Heart right ventricle (tissue), 16 donors: ENCODE measurements at regions of chr20 and their contacts with region 1.

Region 1: GRCh38 chr20:1375515-1375914 is 17.3 kb downstream of the FKBP1A start:
- DNase-seq: no peak
- ATAC-seq: peak in 7 of 8 donors; percentile 36 to 64 (median 52)
- H3K4me3 ChIP-seq: peak overlapping the region in 2 of 10 donors; percentile 10 to 20
- H3K27ac ChIP-seq: peak overlapping the region in 9 of 10 donors; percentile 40 to 80 (median 67)
- H3K4me1 ChIP-seq: peaks cover 25 to 100% (median 96%) of the 10 kb centered on the region in 9 donors
- H3K27me3 ChIP-seq: no peaks in the 10 kb centered on the region
- CTCF ChIP-seq: no peak

Region 2: DNA sequence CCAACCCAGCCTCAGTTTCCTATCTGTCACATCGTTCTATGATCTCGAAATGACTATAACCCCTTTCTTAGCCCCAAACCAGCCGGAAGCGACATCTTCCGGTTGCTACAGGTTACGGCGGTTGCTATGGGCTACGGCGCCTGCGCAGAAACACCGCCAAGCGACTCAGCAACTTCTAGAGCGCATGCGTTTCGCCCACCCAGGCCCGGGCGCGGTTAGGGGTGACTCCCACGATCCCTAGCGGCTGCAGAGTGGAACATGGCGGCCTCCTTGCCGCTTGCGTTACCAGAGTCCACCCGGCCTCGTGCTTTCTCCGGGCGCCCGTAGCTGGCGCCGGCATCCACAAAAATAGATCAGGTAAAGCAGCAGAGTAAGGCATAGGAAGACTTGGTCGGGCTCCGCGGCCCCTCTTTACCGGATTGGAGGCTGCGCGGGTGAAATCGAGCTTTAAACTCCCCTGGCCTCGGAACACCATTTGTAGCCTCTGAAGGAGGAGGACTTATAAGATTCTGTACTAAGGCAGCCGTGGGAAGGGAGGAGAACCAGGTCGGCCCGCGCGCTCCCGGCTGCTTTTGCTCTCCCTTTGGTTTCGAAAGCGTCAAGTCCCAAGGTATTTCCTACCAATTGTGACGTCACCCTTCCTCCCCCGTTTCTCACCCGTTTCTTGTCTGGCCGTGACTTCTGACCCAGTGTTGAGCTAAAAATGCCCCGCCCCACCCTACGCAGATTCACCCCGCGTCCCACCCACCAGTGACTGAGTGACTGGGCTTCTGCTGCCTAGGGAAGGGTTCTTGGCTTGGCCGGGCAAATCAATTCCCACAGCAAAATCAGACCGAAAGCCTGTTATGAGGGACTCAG is 50.1 kb before region 1 on chr20:
- intact Hi-C with region 1: loop called in 3 of 10 experiments (anchors 2 to 5 kb)
- DNase-seq: peak; percentile 98 to 99
- ATAC-seq: peak; percentile 86 to 96 (median 92)
- H3K4me3 ChIP-seq: peak overlapping the region; percentile 54 to 93 (median 84)
- H3K27ac ChIP-seq: peak overlapping the region; percentile 89 to 100 (median 99)
- H3K4me1 ChIP-seq: peaks cover 24 to 92% (median 80%) of the 10 kb centered on the region in 9 donors
- H3K27me3 ChIP-seq: no peaks in the 10 kb centered on the region
- CTCF ChIP-seq: peak in 7 of 9 donors; percentile 22 to 47 (median 32)

Region 3: DNA sequence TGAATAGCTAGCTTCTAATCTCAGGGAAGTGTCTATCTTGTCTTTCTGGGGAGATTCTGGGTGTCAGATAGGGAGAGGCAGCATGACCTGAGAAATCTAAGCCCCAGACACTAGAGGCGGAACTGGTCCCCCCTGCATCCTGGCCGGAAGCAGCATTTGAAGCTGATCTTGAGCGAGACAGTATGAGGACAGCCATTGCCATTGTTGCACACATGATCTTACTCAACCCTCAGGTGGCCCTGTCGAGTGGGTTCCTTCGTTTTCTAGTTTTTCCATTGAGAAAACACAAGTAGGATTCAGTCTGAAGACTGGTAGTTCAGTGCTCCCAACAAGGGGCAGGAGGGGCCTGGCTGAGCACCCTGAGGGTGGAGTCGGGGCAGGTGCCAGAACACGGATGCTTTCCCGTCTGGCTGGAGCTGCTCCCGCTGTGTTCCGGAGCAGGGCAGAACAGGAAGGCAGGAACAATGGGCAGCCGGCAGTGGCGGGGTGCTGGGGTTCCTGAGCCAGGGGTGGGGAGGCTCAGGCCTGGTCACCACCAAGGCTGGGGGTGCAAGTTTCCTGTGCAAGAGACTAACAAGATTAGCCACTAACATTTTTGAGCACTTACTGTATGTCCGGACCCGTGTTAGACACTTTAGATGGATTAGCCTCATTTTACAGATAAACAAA is 38.7 kb before region 1 on chr20:
- intact Hi-C with region 1: loop called in 1 of 10 experiments (anchors 5 kb)
- DNase-seq: peak; percentile 86 to 90
- ATAC-seq: peak; percentile 87 to 97 (median 94)
- H3K4me3 ChIP-seq: peak overlapping the region in 2 of 10 donors; percentile 2 to 8
- H3K27ac ChIP-seq: peak overlapping the region; percentile 54 to 89 (median 78)
- H3K4me1 ChIP-seq: peaks cover 12 to 56% (median 44%) of the 10 kb centered on the region in 9 donors
- H3K27me3 ChIP-seq: no peaks in the 10 kb centered on the region
- CTCF ChIP-seq: no peak